B cell (primary cell): ENCODE measurements at regions of chr3 and their contacts with region 1.

Region 1: DNA sequence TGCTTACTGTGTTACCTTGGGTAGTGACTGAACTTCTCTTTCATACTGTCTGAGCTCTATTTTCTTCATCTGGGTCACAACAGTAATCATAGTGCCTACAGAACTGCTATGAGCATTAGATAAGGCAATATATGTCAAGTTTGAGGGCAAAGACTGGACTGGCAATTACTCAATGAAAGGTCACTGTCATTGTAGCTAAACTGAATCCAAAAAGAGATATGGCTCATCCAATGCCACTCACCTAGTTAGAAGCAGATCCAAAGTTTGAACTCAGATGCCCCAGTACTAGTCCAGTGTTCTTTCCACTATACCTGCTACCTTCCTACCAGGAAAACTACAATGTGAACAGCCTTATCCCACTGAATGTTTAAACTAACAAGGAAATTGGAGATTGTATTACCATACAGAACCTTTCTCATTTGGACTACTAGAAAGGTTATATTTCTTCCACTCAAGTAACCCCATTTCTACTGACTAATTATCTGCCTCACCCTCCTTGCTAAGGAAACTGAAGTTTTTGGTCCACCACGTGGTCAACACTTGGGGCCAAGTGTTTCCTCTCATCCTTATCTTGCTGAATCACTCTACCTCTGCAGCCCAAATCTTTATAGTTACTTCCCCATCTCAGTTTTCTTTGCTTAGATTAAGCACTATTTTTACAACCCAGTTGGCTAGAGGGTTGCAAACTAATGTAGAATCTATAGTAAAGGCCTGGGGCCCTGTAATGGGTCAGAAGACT is 202.3 kb upstream of the LPP start:
- DNase-seq: no peak
- ATAC-seq: peak; percentile 47
- H3K4me3 ChIP-seq: no peak overlapping the region
- H3K4me3 Mint-ChIP-seq: no peak overlapping the region
- H3K27ac ChIP-seq: no peak overlapping the region
- H3K27ac Mint-ChIP-seq: no peak overlapping the region
- H3K4me1 ChIP-seq: peaks cover 14 to 26% of the 10 kb centered on the region in 2 donors
- H3K4me1 Mint-ChIP-seq: peaks cover 26% of the 10 kb centered on the region
- H3K27me3 ChIP-seq: no peaks in the 10 kb centered on the region
- H3K27me3 Mint-ChIP-seq: peaks cover 25% of the 10 kb centered on the region
- CTCF ChIP-seq: no peak

Region 2: GRCh38 chr3:187139126-187139894 is 812.3 kb before region 1 on chr3 and contains the start of gene RPL39L:
- CTCF ChIA-PET with region 1: no interaction called
- POLR2A ChIA-PET with region 1: no interaction called
- intact Hi-C with region 1: no loop called
- DNase-seq: peak; percentile 95
- ATAC-seq: peak; percentile 95
- H3K4me3 ChIP-seq: peak within 1 kb of the TSS in 4 of 5 experiments; percentile 49 to 68 (median 58)
- H3K4me3 Mint-ChIP-seq: peak within 1 kb of the TSS; percentile 90
- H3K27ac ChIP-seq: peak within 1 kb of the TSS; percentile 77 to 79
- H3K27ac Mint-ChIP-seq: peak within 1 kb of the TSS; percentile 90
- H3K4me1 ChIP-seq: peaks cover 12 to 14% of the 10 kb centered on the region in 2 donors
- H3K4me1 Mint-ChIP-seq: peaks cover 16% of the 10 kb centered on the region
- H3K27me3 ChIP-seq: no peaks in the 10 kb centered on the region
- H3K27me3 Mint-ChIP-seq: no peaks in the 10 kb centered on the region
- CTCF ChIP-seq: peak; percentile 79
- total RNA-seq, gene RPL39L: 2.0 and 3.1 TPM in 2 replicates

Region 3: DNA sequence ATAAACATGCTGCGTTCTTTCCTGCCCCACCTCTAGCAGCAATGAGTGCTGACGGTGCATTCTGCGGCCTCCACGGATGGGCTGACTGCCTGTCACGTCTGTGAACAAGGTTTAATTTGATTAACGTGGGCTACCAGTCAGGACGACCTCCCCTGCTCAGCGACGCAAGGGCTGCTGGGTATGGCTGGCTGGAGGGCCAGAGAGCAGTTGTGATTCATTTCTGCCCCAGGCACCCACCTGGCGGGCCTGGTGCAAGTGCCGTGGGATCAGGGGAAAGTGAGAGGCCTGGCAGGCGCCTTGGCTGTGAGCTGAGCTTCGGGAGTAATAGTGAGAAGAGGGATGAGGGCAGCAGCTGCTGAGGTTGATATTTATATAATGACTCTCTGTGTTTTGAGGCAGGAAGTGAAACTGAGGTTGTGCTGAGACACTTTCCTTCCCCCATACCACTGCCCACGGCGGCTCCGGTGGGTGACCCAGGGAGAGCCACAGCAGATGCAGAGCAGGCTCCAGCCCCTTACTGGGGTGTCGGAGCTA is 15.9 kb before region 1 on chr3:
- CTCF ChIA-PET with region 1: interaction called, 3 read pairs
- POLR2A ChIA-PET with region 1: no interaction called
- intact Hi-C with region 1: loop called (anchors 2 kb)
- DNase-seq: peak; percentile 78
- ATAC-seq: peak; percentile 92
- H3K4me3 ChIP-seq: peak overlapping the region in 3 of 5 experiments; percentile 4 to 38 (median 14)
- H3K4me3 Mint-ChIP-seq: peak overlapping the region; percentile 83
- H3K27ac ChIP-seq: peak overlapping the region; percentile 30 to 59
- H3K27ac Mint-ChIP-seq: peak overlapping the region; percentile 91
- H3K4me1 ChIP-seq: peaks cover 20 to 26% of the 10 kb centered on the region in 2 donors
- H3K4me1 Mint-ChIP-seq: peaks cover 38% of the 10 kb centered on the region
- H3K27me3 ChIP-seq: peaks cover 0 to 8% (median 4%) of the 10 kb centered on the region in 4 experiments
- H3K27me3 Mint-ChIP-seq: peaks cover 38% of the 10 kb centered on the region
- CTCF ChIP-seq: no peak